Activated CD8-positive, alpha-beta memory T cell treated with anti-CD3 and anti-CD28 coated beads, Interleukin-2, amount 10 ng/mL, durations not matched to agents 7 days and 5 days (primary cell): ENCODE measurements at regions of chr6 and their contacts with region 1.

Region 1: GRCh38 chr6:34248727-34249551 is at the start of gene SMIM29:
- DNase-seq: peak; percentile 98
- ATAC-seq: peak; percentile 92
- H3K4me3 Mint-ChIP-seq: peak within 1 kb of the TSS; percentile 93
- H3K27ac Mint-ChIP-seq: peak within 1 kb of the TSS; percentile 97
- H3K4me1 Mint-ChIP-seq: peaks cover 49% of the 10 kb centered on the region
- H3K27me3 Mint-ChIP-seq: no peaks in the 10 kb centered on the region
- total RNA-seq, gene SMIM29: 34.0 to 41.4 TPM

Region 2: GRCh38 chr6:34213772-34214171 is 35.2 kb before region 1 on chr6:
- CTCF ChIA-PET with region 1: no interaction called
- DNase-seq: no peak
- ATAC-seq: no peak
- H3K4me3 Mint-ChIP-seq: no peak overlapping the region
- H3K27ac Mint-ChIP-seq: no peak overlapping the region
- H3K4me1 Mint-ChIP-seq: no peaks in the 10 kb centered on the region
- H3K27me3 Mint-ChIP-seq: peaks cover 7% of the 10 kb centered on the region

Region 3: GRCh38 chr6:34223956-34224940 is 24.7 kb before region 1 on chr6:
- CTCF ChIA-PET with region 1: interaction called, 11 read pairs
- DNase-seq: peak; percentile 95
- ATAC-seq: peak; percentile 100
- H3K4me3 Mint-ChIP-seq: peak overlapping the region; percentile 54
- H3K27ac Mint-ChIP-seq: peak overlapping the region; percentile 82
- H3K4me1 Mint-ChIP-seq: peaks cover 29% of the 10 kb centered on the region
- H3K27me3 Mint-ChIP-seq: peaks cover 3% of the 10 kb centered on the region

Region 4: GRCh38 chr6:34392497-34393190 is 143.7 kb after region 1 on chr6 and contains the start of gene NUDT3:
- CTCF ChIA-PET with region 1: interaction called, 55 read pairs
- DNase-seq: peak; percentile 96
- ATAC-seq: peak; percentile 93
- H3K4me3 Mint-ChIP-seq: no peak within 1 kb of the TSS
- H3K27ac Mint-ChIP-seq: peak within 1 kb of the TSS; percentile 82
- H3K4me1 Mint-ChIP-seq: peaks cover 11% of the 10 kb centered on the region
- H3K27me3 Mint-ChIP-seq: no peaks in the 10 kb centered on the region
- total RNA-seq, gene NUDT3: 8.6 to 13.4 TPM

Region 5: DNA sequence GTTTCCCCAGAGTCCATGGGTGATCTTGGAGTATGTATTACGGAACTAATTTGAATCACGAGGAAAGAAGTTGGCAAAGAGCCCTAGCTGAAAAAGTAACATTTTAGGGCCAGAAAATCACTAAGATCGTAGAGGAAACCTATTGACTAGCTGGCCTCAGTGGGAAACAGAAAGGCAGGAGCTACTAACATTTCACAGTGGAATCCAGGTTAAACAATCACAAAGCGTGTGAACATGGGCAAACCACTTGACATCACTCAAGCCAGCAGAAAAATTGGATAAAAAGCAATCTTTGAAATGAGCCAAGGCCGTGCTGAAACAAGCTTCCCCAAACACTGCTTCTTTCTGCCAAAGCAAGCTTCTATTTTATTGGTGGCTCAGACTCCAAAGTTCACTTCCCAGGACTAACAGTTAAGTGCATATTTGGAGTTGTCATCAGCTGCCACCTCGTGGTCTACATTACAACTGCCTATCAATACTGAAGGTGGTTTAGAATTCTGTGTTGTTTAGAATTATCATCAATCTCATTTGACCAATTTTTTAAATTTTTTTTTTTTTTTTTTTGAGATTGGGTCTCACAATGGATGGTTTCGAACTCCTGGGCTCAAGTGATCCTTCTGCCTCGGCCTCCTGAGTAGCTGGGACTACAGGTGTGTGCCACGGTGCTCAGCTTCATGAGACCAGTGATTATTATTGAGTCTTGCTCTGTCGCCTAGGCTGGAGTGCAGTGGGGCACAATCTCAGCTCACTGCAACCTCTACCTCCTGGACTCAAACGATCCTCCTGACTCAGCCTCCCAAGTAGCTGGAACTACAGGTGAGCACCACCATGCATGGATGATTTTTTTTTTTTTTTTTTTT is 166.3 kb after region 1 on chr6:
- CTCF ChIA-PET with region 1: interaction called, 80 read pairs
- DNase-seq: peak; percentile 62
- ATAC-seq: peak; percentile 71
- H3K4me3 Mint-ChIP-seq: no peak overlapping the region
- H3K27ac Mint-ChIP-seq: no peak overlapping the region
- H3K4me1 Mint-ChIP-seq: peaks cover 15% of the 10 kb centered on the region
- H3K27me3 Mint-ChIP-seq: no peaks in the 10 kb centered on the region

Region 6: GRCh38 chr6:34425498-34426410 is 176.8 kb after region 1 on chr6 and contains the start of gene RPS10:
- CTCF ChIA-PET with region 1: interaction called, 35 read pairs
- DNase-seq: peak; percentile 93
- ATAC-seq: peak; percentile 94
- H3K4me3 Mint-ChIP-seq: peak within 1 kb of the TSS; percentile 95
- H3K27ac Mint-ChIP-seq: peak within 1 kb of the TSS; percentile 98
- H3K4me1 Mint-ChIP-seq: peaks cover 37% of the 10 kb centered on the region
- H3K27me3 Mint-ChIP-seq: peaks cover 7% of the 10 kb centered on the region
- total RNA-seq, gene RPS10: 1,124 to 1,323 TPM

Region 7: GRCh38 chr6:34610819-34611477 is 362.0 kb after region 1 on chr6:
- CTCF ChIA-PET with region 1: interaction called, 23 read pairs
- DNase-seq: no peak
- ATAC-seq: no peak
- H3K4me3 Mint-ChIP-seq: no peak overlapping the region
- H3K27ac Mint-ChIP-seq: no peak overlapping the region
- H3K4me1 Mint-ChIP-seq: peaks cover 19% of the 10 kb centered on the region
- H3K27me3 Mint-ChIP-seq: no peaks in the 10 kb centered on the region